ENCODE measurements at regions of chr14 and their contacts with region 1.

Region 1: GRCh38 chr14:23095196-23096108 is at the start of gene C14orf119:
- DNase-seq: peak; percentile 100
- ATAC-seq: peak; percentile 86
- H3K4me3 ChIP-seq: peak within 1 kb of the TSS; percentile 76 to 99 (median 94)
- H3K4me3 Mint-ChIP-seq: no peak within 1 kb of the TSS
- H3K27ac ChIP-seq: peak within 1 kb of the TSS; percentile 92 to 97
- H3K27ac Mint-ChIP-seq: no peak within 1 kb of the TSS
- H3K4me1 ChIP-seq: peaks cover 20 to 24% of the 10 kb centered on the region in 2 donors
- H3K4me1 Mint-ChIP-seq: peaks cover 34% of the 10 kb centered on the region
- H3K27me3 ChIP-seq: no peaks in the 10 kb centered on the region
- H3K27me3 Mint-ChIP-seq: no peaks in the 10 kb centered on the region
- CTCF ChIP-seq: no peak
- total RNA-seq, gene C14orf119: 30.6 and 38.5 TPM in 2 replicates

Region 2: DNA sequence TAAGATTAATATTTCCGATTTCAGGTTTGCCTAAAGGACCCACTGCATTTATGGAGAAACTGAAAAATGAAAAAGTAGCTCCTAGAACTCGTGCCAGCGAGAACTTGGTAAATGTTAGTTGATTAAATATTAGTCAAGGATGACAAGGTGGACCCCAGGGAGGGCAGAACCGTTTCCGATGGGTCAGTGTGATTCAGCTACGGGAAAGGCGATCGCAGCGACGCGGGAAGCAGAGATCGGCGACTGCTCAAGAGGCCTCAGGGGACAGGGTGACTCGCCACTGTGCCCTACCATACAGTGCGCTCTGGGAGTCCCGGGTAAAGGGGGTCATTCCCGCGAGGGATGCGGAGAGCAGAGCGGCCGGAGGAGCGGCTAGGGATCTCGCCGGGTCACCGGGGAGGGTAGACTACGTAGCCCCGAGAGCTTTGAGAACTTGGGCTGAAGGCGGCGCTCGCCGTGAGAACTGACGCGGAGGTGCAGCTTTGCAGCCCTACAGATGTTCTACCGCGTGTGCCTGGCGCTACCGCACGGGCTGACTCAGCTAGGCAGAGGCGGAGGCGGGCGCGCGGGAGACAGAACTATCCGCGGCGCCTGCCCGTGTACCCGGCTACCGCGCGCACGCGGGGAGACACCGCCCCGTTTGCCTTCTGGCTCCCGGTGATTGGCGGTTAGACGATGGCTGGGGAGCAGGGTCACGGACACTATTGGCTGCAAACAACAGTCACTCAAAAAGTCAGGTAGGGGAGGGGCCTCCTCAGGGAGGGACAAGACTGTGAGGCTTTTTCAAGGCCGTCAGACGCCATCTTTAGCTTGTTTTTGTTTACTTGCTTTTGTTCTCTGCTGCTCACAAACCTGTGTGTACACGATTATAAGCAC is 88.7 kb before region 1 on chr14:
- CTCF ChIA-PET with region 1: no interaction called
- POLR2A ChIA-PET with region 1: interaction called, 20 read pairs
- intact Hi-C with region 1: loop called (anchors 1 kb)
- DNase-seq: peak; percentile 98
- ATAC-seq: peak; percentile 91
- H3K4me3 ChIP-seq: peak overlapping the region; percentile 70 to 95 (median 85)
- H3K4me3 Mint-ChIP-seq: peak overlapping the region; percentile 99
- H3K27ac ChIP-seq: peak overlapping the region; percentile 75 to 88
- H3K27ac Mint-ChIP-seq: peak overlapping the region; percentile 98
- H3K4me1 ChIP-seq: peaks cover 24 to 32% of the 10 kb centered on the region in 2 donors
- H3K4me1 Mint-ChIP-seq: peaks cover 42% of the 10 kb centered on the region
- H3K27me3 ChIP-seq: no peaks in the 10 kb centered on the region
- H3K27me3 Mint-ChIP-seq: no peaks in the 10 kb centered on the region
- CTCF ChIP-seq: no peak

Region 3: GRCh38 chr14:23068476-23069412 is 26.7 kb before region 1 on chr14:
- CTCF ChIA-PET with region 1: interaction called, 29 read pairs
- POLR2A ChIA-PET with region 1: interaction called, 7 read pairs
- intact Hi-C with region 1: no loop called
- DNase-seq: peak; percentile 87
- ATAC-seq: peak; percentile 85
- H3K4me3 ChIP-seq: no peak overlapping the region
- H3K4me3 Mint-ChIP-seq: no peak overlapping the region
- H3K27ac ChIP-seq: peak overlapping the region; percentile 10 to 28
- H3K27ac Mint-ChIP-seq: peak overlapping the region; percentile 83
- H3K4me1 ChIP-seq: peaks cover 21 to 41% of the 10 kb centered on the region in 2 donors
- H3K4me1 Mint-ChIP-seq: peaks cover 38% of the 10 kb centered on the region
- H3K27me3 ChIP-seq: no peaks in the 10 kb centered on the region
- H3K27me3 Mint-ChIP-seq: no peaks in the 10 kb centered on the region
- CTCF ChIP-seq: peak; percentile 99

Region 4: GRCh38 chr14:23193432-23193831 is 98.0 kb after region 1 on chr14:
- CTCF ChIA-PET with region 1: no interaction called
- POLR2A ChIA-PET with region 1: no interaction called
- intact Hi-C with region 1: no loop called
- DNase-seq: no peak
- ATAC-seq: no peak
- H3K4me3 ChIP-seq: no peak overlapping the region
- H3K4me3 Mint-ChIP-seq: no peak overlapping the region
- H3K27ac ChIP-seq: no peak overlapping the region
- H3K27ac Mint-ChIP-seq: no peak overlapping the region
- H3K4me1 ChIP-seq: no peaks in the 10 kb centered on the region
- H3K4me1 Mint-ChIP-seq: no peaks in the 10 kb centered on the region
- H3K27me3 ChIP-seq: no peaks in the 10 kb centered on the region
- H3K27me3 Mint-ChIP-seq: peaks cover 9% of the 10 kb centered on the region
- CTCF ChIP-seq: no peak

Region 5: DNA sequence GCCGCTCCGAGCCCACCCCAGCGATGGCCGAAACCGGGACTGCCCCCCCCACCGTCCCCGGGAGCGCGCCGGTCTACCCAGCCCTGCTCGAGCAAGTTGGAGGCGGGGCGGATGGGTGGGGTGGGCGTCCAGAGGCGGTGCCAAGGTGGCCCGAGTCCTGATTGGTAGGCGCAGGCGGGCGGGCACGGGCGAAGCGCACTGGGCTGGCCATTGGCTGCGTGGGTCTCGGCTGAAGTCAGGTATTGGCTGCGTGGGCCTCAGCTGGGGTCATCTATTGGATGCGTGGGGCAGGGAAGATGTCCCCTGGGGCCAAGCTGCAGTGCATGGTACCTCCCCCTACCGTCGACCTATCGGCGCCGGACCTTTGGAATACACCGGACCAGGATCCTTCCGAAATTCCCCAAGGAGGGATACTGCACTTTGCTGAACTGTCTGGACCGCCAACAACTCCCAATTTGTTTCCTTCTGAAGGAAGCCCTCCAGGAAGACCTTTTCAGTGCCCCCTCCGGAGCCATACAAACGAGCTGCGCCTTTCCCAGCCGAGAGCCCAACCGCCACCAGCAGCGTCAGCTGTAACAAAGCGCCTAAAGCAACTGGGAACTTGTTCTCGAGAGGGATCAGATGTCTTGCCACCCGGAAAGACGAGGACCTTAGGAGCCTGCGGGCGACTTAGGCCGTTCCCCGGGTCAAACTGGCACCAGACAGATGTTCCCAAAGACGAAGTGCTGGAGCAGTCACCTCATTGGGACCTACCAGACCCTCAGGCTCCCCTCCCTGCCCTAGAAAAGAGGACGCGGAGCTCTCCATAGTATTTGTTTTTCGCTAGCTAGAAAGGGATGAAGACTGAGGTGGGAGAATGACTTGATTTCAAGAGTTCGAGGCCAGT is 190.8 kb after region 1 on chr14 and contains the start of gene HOMEZ:
- CTCF ChIA-PET with region 1: no interaction called
- POLR2A ChIA-PET with region 1: no interaction called
- intact Hi-C with region 1: loop called (anchors 1 kb)
- DNase-seq: peak; percentile 97
- ATAC-seq: peak; percentile 97
- H3K4me3 ChIP-seq: peak within 1 kb of the TSS; percentile 56 to 90 (median 83)
- H3K4me3 Mint-ChIP-seq: peak within 1 kb of the TSS; percentile 98
- H3K27ac ChIP-seq: peak within 1 kb of the TSS; percentile 49 to 83
- H3K27ac Mint-ChIP-seq: peak within 1 kb of the TSS; percentile 93
- H3K4me1 ChIP-seq: peaks cover 13 to 17% of the 10 kb centered on the region in 2 donors
- H3K4me1 Mint-ChIP-seq: peaks cover 23% of the 10 kb centered on the region
- H3K27me3 ChIP-seq: no peaks in the 10 kb centered on the region
- H3K27me3 Mint-ChIP-seq: no peaks in the 10 kb centered on the region
- CTCF ChIP-seq: no peak
- total RNA-seq, gene HOMEZ: 15.5 TPM in 2 replicates

Region 6: GRCh38 chr14:23308721-23309445 is 213.4 kb after region 1 on chr14:
- CTCF ChIA-PET with region 1: no interaction called
- POLR2A ChIA-PET with region 1: no interaction called
- intact Hi-C with region 1: no loop called
- DNase-seq: no peak
- ATAC-seq: no peak
- H3K4me3 ChIP-seq: no peak overlapping the region
- H3K4me3 Mint-ChIP-seq: no peak overlapping the region
- H3K27ac ChIP-seq: no peak overlapping the region
- H3K27ac Mint-ChIP-seq: peak overlapping the region; percentile 26
- H3K4me1 ChIP-seq: peaks cover 10 to 24% of the 10 kb centered on the region in 2 donors
- H3K4me1 Mint-ChIP-seq: peaks cover 26% of the 10 kb centered on the region
- H3K27me3 ChIP-seq: no peaks in the 10 kb centered on the region
- H3K27me3 Mint-ChIP-seq: no peaks in the 10 kb centered on the region
- CTCF ChIP-seq: no peak

Region 7: DNA sequence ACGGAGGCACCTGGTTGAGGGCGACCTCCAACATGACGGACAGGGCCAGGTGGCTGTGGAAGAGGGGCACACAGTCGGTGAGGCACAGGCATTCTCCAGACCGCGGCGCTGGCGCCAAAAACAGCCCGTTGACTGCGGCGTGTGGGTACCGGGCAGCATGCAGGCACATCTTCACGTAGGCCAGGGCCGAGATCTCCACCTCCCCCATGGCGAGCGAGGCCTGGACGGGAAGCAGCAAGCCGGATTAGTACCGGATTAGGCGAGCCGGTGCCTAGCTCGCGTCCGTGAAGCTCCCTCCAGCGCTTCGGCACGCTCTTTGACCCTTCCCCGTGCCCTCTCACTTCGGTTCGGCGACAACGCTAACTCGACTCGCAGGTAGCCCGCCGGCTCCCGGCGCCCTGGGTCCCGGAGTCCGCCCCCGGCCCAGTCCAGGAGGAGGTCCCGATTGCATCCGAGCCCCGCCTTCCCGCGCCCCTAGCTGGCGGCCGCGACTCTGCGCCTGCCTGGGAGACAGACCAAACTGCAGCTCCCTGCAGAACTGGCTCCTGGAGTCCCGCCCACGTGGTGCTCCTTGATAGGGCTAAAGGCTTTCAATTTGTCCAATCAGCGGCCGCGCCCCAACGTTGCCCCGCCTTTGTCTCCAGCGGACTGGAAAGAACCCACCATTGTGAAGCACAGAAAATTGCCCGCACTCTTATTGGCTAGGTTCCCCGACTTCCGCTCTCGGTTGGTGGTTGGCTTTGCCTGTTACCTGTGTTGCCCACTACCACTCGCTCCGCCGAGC is 1045.8 kb after region 1 on chr14 and contains the start of gene EMC9:
- CTCF ChIA-PET with region 1: no interaction called
- POLR2A ChIA-PET with region 1: no interaction called
- intact Hi-C with region 1: loop called (anchors 10 kb)
- DNase-seq: peak; percentile 99
- ATAC-seq: peak; percentile 89
- H3K4me3 ChIP-seq: peak within 1 kb of the TSS; percentile 67 to 93 (median 82)
- H3K4me3 Mint-ChIP-seq: peak within 1 kb of the TSS; percentile 96
- H3K27ac ChIP-seq: peak within 1 kb of the TSS; percentile 63 to 80
- H3K27ac Mint-ChIP-seq: peak within 1 kb of the TSS; percentile 95
- H3K4me1 ChIP-seq: peaks cover 33 to 50% of the 10 kb centered on the region in 2 donors
- H3K4me1 Mint-ChIP-seq: peaks cover 64% of the 10 kb centered on the region
- H3K27me3 ChIP-seq: no peaks in the 10 kb centered on the region
- H3K27me3 Mint-ChIP-seq: no peaks in the 10 kb centered on the region
- CTCF ChIP-seq: peak; percentile 37
- total RNA-seq, gene EMC9: 24.7 and 26.4 TPM in 2 replicates